ENCODE measurements at regions of chr19 and their contacts with region 1.

Region 1: GRCh38 chr19:3035542-3036118 is 6.5 kb upstream of the TLE2 start:
- DNase-seq: peak; percentile 94 to 95
- H3K4me3 ChIP-seq: peak overlapping the region; percentile 44 to 73 (median 57)
- H3K27ac ChIP-seq: peak overlapping the region; percentile 49; the same call in 1 of the 2 replicates
- H3K4me1 ChIP-seq: peaks cover 0 to 12% (median 9%) of the 10 kb centered on the region in 4 experiments; a peak in 6 of 7 replicates
- H3K27me3 ChIP-seq: peaks cover 3 to 28% (median 20%) of the 10 kb centered on the region in 4 experiments; a peak in 5 of 7 replicates
- CTCF ChIP-seq: no peak
- EP300 ChIP-seq: no peak
- POLR2A ChIP-seq: peak in 1 of 2 experiments; percentile 58; a peak in 2 of 3 replicates
- RAD21 ChIP-seq: no peak

Region 2: DNA sequence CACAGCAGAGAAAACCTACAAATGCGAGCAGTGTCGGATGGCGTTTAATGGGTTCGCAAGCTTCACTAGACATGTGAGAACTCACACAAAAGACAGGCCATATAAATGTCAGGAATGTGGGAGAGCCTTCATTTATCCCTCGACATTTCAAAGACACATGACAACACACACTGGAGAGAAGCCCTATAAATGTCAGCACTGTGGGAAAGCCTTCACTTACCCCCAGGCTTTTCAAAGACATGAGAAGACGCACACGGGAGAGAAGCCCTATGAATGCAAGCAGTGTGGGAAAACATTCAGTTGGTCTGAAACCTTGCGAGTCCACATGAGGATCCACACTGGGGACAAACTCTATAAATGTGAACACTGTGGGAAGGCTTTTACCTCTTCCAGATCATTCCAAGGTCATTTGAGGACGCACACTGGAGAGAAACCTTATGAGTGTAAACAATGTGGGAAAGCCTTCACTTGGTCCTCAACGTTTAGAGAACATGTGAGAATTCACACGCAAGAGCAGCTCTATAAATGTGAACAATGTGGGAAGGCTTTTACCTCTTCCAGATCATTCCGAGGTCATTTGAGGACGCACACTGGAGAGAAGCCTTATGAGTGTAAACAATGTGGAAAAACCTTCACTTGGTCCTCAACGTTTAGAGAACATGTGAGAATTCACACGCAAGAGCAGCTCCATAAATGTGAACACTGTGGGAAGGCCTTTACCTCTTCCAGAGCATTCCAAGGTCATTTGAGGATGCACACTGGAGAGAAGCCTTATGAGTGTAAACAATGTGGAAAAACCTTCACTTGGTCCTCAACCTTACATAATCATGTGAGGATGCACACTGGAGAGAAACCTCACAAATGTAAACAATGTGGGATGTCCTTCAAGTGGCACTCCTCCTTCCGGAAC is 118.1 kb before region 1 on chr19:
- CTCF ChIA-PET with region 1: no interaction called
- POLR2A ChIA-PET with region 1: no interaction called
- DNase-seq: no peak
- H3K4me3 ChIP-seq: no peak overlapping the region
- H3K27ac ChIP-seq: no peak overlapping the region
- H3K4me1 ChIP-seq: no peaks in the 10 kb centered on the region
- H3K27me3 ChIP-seq: no peaks in the 10 kb centered on the region
- CTCF ChIP-seq: no peak
- EP300 ChIP-seq: no peak
- POLR2A ChIP-seq: no peak
- RAD21 ChIP-seq: no peak

Region 3: GRCh38 chr19:2962045-2962561 is 73.5 kb before region 1 on chr19:
- CTCF ChIA-PET with region 1: interaction called, 21 read pairs
- POLR2A ChIA-PET with region 1: interaction called, 3 read pairs
- DNase-seq: peak in 1 of 2 experiments; percentile 69
- H3K4me3 ChIP-seq: no peak overlapping the region
- H3K27ac ChIP-seq: no peak overlapping the region
- H3K4me1 ChIP-seq: no peaks in the 10 kb centered on the region
- H3K27me3 ChIP-seq: no peaks in the 10 kb centered on the region; a peak in 1 of 7 replicates
- CTCF ChIP-seq: peak in 2 of 3 experiments; percentile 82 to 83; a peak in 3 of 4 replicates
- EP300 ChIP-seq: no peak
- POLR2A ChIP-seq: no peak
- RAD21 ChIP-seq: peak; percentile 97 to 98

Region 4: GRCh38 chr19:2983351-2984195 is 52.1 kb before region 1 on chr19:
- CTCF ChIA-PET with region 1: interaction called, 4 read pairs
- POLR2A ChIA-PET with region 1: interaction called, 13 read pairs
- DNase-seq: peak; percentile 83 to 86
- H3K4me3 ChIP-seq: peak overlapping the region in 1 of 4 experiments; percentile 43; a peak in 2 of 8 replicates
- H3K27ac ChIP-seq: no peak overlapping the region
- H3K4me1 ChIP-seq: peaks cover 3 to 28% (median 22%) of the 10 kb centered on the region in 4 experiments
- H3K27me3 ChIP-seq: peaks cover 0 to 5% (median 2%) of the 10 kb centered on the region in 4 experiments; a peak in 2 of 7 replicates
- CTCF ChIP-seq: peak in 1 of 3 experiments; percentile 6; a peak in 1 of 4 replicates
- EP300 ChIP-seq: 0 out of 3 replicates have a peak, but pooled peaks of 1 of the 2 experiments have one; percentile 59
- POLR2A ChIP-seq: no peak
- RAD21 ChIP-seq: peak in 1 of 2 experiments; percentile 0; a peak in 1 of 4 replicates

Region 5: GRCh38 chr19:3047425-3048189 is 12.0 kb after region 1 on chr19:
- CTCF ChIA-PET with region 1: interaction called, 36 read pairs
- POLR2A ChIA-PET with region 1: interaction called, 56 read pairs
- DNase-seq: peak in 1 of 2 experiments; percentile 79
- H3K4me3 ChIP-seq: peak overlapping the region; percentile 19 to 61 (median 34); a peak in 7 of 8 replicates
- H3K27ac ChIP-seq: no peak overlapping the region
- H3K4me1 ChIP-seq: peaks cover 3 to 9% (median 6%) of the 10 kb centered on the region in 4 experiments; a peak in 6 of 7 replicates
- H3K27me3 ChIP-seq: peaks cover 0 to 2% (median 0%) of the 10 kb centered on the region in 4 experiments; a peak in 3 of 7 replicates
- CTCF ChIP-seq: no peak
- EP300 ChIP-seq: no peak
- POLR2A ChIP-seq: no peak
- RAD21 ChIP-seq: no peak

Region 6: DNA sequence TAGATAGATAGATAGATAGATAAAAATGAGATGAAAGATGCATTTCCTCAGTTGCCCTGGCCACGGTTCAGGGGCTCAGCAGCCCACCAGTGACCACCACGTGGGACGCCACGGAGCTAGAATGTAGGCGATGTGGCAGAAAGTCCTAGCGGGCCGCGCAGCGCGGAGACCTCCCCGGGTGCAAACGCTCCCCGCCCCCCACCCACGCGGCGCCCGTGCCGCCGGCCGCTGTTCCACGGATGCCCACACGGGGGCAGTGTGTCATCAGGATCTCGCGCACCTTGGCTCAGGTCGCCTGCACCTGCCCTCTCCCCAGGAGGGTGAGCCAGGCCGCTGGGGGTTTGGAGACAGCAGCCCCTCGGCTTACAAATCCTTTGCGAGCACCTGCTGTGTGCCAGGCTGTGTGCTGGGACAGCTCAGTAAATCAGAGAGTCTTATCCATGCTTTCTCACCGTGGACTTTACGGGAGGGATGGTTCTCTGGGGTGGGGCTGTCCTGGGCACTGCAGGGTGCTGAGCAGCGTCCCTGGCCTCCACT is 40.3 kb after region 1 on chr19:
- CTCF ChIA-PET with region 1: interaction called, 30 read pairs
- POLR2A ChIA-PET with region 1: interaction called, 4 read pairs
- DNase-seq: peak in 1 of 2 experiments; percentile 91
- H3K4me3 ChIP-seq: peak overlapping the region in 3 of 4 experiments; percentile 15 to 48 (median 18); a peak in 4 of 8 replicates
- H3K27ac ChIP-seq: no peak overlapping the region
- H3K4me1 ChIP-seq: peaks cover 0 to 4% (median 0%) of the 10 kb centered on the region in 4 experiments; a peak in 1 of 7 replicates
- H3K27me3 ChIP-seq: peaks cover 0 to 4% (median 1%) of the 10 kb centered on the region in 4 experiments; a peak in 1 of 7 replicates
- CTCF ChIP-seq: peak; percentile 88 to 95 (median 92)
- EP300 ChIP-seq: peak in 1 of 2 experiments; percentile 13; a peak in 1 of 3 replicates
- POLR2A ChIP-seq: no peak
- RAD21 ChIP-seq: peak; percentile 91 to 94